ENCODE measurements at regions of chr22 and their contacts with region 1.

Region 1: DNA sequence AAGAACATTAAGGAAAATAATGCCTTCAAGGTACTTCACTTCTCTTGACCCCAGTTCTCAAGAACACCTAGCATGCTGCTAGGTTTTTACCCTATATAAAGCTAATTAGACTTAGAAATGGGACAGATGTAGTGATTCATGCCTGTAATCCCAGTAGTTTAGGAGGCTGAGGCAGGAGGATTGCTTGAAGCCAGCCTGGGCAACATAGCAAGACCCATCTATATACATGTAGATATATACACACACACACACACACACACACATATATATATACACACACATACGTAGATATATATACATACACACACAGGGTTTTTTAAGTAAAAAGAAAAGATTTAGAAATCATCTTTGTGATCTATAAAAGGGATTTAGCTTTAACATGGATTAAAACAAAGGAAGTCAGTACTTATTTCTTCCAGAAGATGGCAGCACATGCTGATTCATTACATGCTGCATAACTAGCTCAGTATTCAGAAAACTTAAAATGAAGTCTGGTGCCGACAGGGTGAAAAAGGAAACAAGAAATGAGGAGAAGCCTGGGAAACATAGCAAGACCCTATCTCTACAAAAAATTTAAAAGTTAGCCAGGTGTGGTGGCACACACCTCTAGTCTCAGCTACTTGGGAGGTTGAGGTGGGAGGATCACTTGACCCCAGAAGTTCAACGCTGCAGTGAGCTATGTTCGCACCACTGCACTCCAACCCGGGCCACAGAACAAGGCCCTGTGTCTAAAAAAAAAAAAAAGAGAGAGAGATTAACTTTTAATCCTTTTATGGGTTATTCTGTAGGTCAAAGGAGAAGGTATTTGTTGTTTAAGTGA is 28.5 kb upstream of the RBX1 start:
- DNase-seq: peak; percentile 83
- H3K4me3 ChIP-seq: no peak overlapping the region
- H3K27ac ChIP-seq: peak overlapping the region; percentile 14
- H3K4me1 ChIP-seq: peaks cover 3% of the 10 kb centered on the region
- H3K27me3 ChIP-seq: no peaks in the 10 kb centered on the region
- CTCF ChIP-seq: peak; percentile 39 to 43
- POLR2A ChIP-seq: no peak

Region 2: DNA sequence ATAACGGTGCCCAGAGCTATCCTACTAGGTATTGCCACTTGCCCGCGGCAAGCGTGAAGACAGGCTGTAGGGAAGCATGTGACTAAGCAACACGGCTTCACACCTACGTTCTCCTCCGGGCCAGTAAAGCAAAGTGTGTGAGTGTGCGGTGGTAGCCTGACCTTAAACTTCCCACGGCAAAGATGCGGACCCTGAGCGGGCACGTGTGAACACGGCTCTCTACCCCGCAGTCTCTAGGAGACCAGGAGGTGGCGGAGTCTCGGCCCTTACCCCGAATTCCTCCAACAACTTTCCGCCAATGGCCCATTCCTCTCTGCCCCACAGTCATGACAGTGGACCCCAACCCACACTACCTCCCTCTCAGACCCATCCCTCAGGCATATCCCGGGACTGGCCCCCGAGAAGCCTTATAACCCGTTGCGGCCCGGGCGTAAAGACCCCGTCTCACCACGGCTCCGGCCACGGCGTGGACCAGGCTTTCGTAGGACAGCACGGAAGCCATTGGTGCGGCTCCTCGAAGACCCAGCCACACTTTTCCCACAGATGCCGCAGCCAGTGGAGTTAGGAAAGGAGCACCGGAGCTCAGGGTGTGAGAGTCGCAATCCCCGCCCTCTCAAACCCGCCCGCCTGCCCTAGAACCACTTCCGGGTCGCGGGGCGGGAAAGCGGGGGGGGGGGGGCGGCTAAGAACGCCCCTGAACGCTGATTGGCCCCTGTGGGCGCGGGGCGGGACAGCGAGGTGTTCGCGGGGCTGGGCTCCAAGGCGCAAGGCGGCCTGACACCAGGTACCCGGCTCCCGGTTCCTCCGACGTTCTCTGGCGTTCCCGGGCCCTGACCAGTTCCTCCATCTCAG is 103.7 kb before region 1 on chr22 and contains the start of gene SLC25A17:
- CTCF ChIA-PET with region 1: no interaction called
- POLR2A ChIA-PET with region 1: no interaction called
- dilution Hi-C with region 1: no loop called
- intact Hi-C with region 1: no loop called
- DNase-seq: peak; percentile 87
- H3K4me3 ChIP-seq: peak within 1 kb of the TSS; percentile 80 to 95 (median 83)
- H3K27ac ChIP-seq: peak within 1 kb of the TSS; percentile 46
- H3K4me1 ChIP-seq: peaks cover 15% of the 10 kb centered on the region
- H3K27me3 ChIP-seq: no peaks in the 10 kb centered on the region
- CTCF ChIP-seq: peak; percentile 34 to 61
- POLR2A ChIP-seq: peak; percentile 69
- total RNA-seq, gene SLC25A17: 24.9 and 25.8 TPM in 2 replicates

Region 3: GRCh38 chr22:40911772-40912171 is 10.9 kb before region 1 on chr22:
- CTCF ChIA-PET with region 1: interaction called, 22 read pairs
- POLR2A ChIA-PET with region 1: no interaction called
- dilution Hi-C with region 1: no loop called
- intact Hi-C with region 1: no loop called
- DNase-seq: no peak
- H3K4me3 ChIP-seq: no peak overlapping the region
- H3K27ac ChIP-seq: no peak overlapping the region
- H3K4me1 ChIP-seq: no peaks in the 10 kb centered on the region
- H3K27me3 ChIP-seq: no peaks in the 10 kb centered on the region
- CTCF ChIP-seq: no peak
- POLR2A ChIP-seq: no peak

Region 4: DNA sequence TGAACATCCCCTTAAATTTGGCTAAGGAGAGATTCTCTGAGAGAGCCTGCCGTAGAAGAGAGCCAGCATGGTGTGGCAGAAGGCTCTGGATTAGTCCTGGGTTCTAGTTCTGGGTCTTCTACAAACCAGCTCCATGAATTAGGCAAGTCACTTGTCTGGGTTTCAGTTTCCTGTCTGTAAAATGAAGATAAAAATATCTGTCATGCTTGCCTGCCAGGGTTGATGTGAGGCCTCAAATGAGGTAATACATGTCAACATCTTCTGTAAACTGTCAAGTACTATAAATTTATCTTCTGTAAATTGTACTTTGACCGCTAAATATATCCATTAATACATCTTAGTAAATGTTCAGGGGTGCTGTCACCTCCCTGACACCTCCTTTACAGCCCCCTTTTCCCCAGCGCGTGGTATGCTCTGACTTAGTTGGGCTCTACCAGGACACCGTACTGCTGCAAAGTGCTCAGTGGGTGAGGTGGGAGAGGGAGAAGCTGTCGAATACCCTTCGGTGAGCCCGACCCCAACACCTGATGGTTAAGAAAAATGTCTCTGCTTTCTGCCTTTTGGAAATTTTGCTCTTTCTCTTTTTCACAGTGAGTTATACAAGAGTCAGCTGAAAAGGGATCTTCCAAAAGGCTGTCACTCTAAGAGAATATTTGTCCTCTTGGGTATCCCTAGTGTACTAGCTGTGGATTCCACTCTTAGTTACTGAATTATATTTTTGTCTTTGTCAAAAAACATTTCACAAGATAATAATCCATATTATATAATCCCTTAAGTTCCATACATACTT is 43.4 kb after region 1 on chr22:
- CTCF ChIA-PET with region 1: interaction called, 19 read pairs
- POLR2A ChIA-PET with region 1: no interaction called
- dilution Hi-C with region 1: no loop called
- intact Hi-C with region 1: no loop called
- DNase-seq: no peak
- H3K4me3 ChIP-seq: no peak overlapping the region
- H3K27ac ChIP-seq: no peak overlapping the region
- H3K4me1 ChIP-seq: peaks cover 5% of the 10 kb centered on the region
- H3K27me3 ChIP-seq: no peaks in the 10 kb centered on the region
- CTCF ChIP-seq: no peak
- POLR2A ChIP-seq: no peak

Region 5: DNA sequence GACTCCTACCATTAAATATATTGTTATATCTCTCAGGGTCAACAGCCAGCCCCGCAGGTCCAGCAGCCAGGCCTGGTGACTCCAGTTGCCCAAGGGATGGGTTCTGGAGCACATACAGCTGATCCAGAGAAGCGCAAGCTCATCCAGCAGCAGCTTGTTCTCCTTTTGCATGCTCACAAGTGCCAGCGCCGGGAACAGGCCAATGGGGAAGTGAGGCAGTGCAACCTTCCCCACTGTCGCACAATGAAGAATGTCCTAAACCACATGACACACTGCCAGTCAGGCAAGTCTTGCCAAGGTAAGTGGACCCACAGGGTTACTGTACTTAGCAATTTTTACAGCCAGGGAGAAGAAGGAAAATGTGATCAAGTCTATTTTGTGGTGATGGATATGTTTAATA is 204.8 kb after region 1 on chr22:
- CTCF ChIA-PET with region 1: interaction called, 24 read pairs
- POLR2A ChIA-PET with region 1: no interaction called
- dilution Hi-C with region 1: no loop called
- intact Hi-C with region 1: no loop called
- DNase-seq: no peak
- H3K4me3 ChIP-seq: no peak overlapping the region
- H3K27ac ChIP-seq: no peak overlapping the region
- H3K4me1 ChIP-seq: peaks cover 3% of the 10 kb centered on the region
- H3K27me3 ChIP-seq: no peaks in the 10 kb centered on the region
- CTCF ChIP-seq: no peak
- POLR2A ChIP-seq: no peak

Region 6: GRCh38 chr22:41197038-41197972 is 274.6 kb after region 1 on chr22:
- CTCF ChIA-PET with region 1: interaction called, 10 read pairs
- POLR2A ChIA-PET with region 1: no interaction called
- dilution Hi-C with region 1: no loop called
- intact Hi-C with region 1: no loop called
- DNase-seq: peak; percentile 75
- H3K4me3 ChIP-seq: peak overlapping the region; percentile 22 to 65 (median 31)
- H3K27ac ChIP-seq: no peak overlapping the region
- H3K4me1 ChIP-seq: peaks cover 5% of the 10 kb centered on the region
- H3K27me3 ChIP-seq: no peaks in the 10 kb centered on the region
- CTCF ChIP-seq: peak in 1 of 2 donors; percentile 10
- POLR2A ChIP-seq: no peak